ENCODE measurements at regions of chr1 and their contacts with region 1.

Region 1: GRCh38 chr1:67430352-67431155 is at the start of gene SERBP1:
- DNase-seq: peak; percentile 85 to 99 (median 90)
- ATAC-seq: peak; percentile 89
- H3K4me3 ChIP-seq: peak within 1 kb of the TSS; percentile 96
- H3K27ac ChIP-seq: peak within 1 kb of the TSS; percentile 98
- H3K4me1 ChIP-seq: peaks cover 14 to 19% of the 10 kb centered on the region in 2 experiments; a peak in 4 of 5 replicates
- H3K27me3 ChIP-seq: no peaks in the 10 kb centered on the region
- CTCF ChIP-seq: no peak; a peak in 1 of 6 replicates
- EP300 ChIP-seq: peak; percentile 5; the same call in 1 of the 2 replicates
- POLR2A ChIP-seq: peak; percentile 93
- RAD21 ChIP-seq: no peak
- polyA plus RNA-seq, gene SERBP1: 79.9 to 81.2 TPM

Region 2: GRCh38 chr1:67005068-67005467 is 425.5 kb before region 1 on chr1:
- CTCF ChIA-PET with region 1: no interaction called
- POLR2A ChIA-PET with region 1: no interaction called
- in situ Hi-C with region 1: no loop called
- intact Hi-C with region 1: no loop called
- DNase-seq: no peak
- ATAC-seq: no peak
- H3K4me3 ChIP-seq: no peak overlapping the region
- H3K27ac ChIP-seq: no peak overlapping the region
- H3K4me1 ChIP-seq: peaks cover 0 to 4% of the 10 kb centered on the region in 2 experiments; a peak in 2 of 5 replicates
- H3K27me3 ChIP-seq: no peaks in the 10 kb centered on the region
- CTCF ChIP-seq: no peak
- EP300 ChIP-seq: no peak
- POLR2A ChIP-seq: no peak
- RAD21 ChIP-seq: no peak

Region 3: DNA sequence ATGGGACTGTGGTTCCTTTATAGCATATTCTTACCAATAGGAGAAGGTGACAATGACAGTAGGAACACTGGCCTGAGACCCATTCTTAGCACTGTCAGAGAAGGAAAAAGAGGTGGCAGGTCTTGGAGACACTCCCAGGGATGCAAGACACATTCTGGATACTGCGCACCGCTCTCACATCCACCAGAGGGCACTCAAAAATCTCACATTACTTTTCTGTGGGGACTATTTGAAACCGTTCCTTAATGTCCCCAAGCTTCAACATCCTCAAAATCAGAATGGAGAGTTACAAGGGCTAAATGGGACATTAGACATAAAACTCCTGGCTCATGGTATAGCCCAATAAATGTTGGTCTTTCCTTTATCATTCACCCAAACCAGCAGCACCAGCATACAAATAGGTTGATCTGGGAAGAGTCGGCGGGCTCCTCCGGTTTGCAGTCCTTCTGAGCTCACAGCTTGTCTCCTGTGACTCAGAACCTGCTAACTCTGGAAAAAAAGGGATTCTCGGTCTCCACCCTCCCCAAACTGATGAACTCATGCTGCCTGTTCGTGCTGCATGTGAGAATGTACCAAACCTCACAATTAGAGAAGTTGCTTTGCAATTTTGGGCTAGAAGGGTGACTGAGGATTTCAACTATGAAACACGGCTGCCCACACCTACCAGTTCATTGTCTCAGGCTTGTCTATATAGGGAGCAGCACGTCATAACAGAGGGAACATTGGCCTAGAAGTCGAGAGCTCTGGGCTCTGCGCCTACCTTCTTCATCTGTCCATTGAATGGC is 82.7 kb before region 1 on chr1:
- CTCF ChIA-PET with region 1: interaction called, 3 read pairs
- POLR2A ChIA-PET with region 1: interaction called, 4 read pairs
- in situ Hi-C with region 1: no loop called
- intact Hi-C with region 1: loop called (anchors 2 kb)
- DNase-seq: peak; percentile 33 to 71 (median 58)
- ATAC-seq: peak; percentile 96
- H3K4me3 ChIP-seq: no peak overlapping the region
- H3K27ac ChIP-seq: no peak overlapping the region
- H3K4me1 ChIP-seq: peaks cover 0 to 6% of the 10 kb centered on the region in 2 experiments; a peak in 1 of 5 replicates
- H3K27me3 ChIP-seq: no peaks in the 10 kb centered on the region
- CTCF ChIP-seq: peak; percentile 69 to 87 (median 84)
- EP300 ChIP-seq: no peak
- POLR2A ChIP-seq: no peak
- RAD21 ChIP-seq: peak; percentile 73 to 93

Region 4: GRCh38 chr1:67418839-67419586 is 11.5 kb before region 1 on chr1:
- CTCF ChIA-PET with region 1: no interaction called
- POLR2A ChIA-PET with region 1: interaction called, 35 read pairs
- in situ Hi-C with region 1: no loop called
- intact Hi-C with region 1: no loop called
- DNase-seq: no peak
- ATAC-seq: no peak
- H3K4me3 ChIP-seq: no peak overlapping the region
- H3K27ac ChIP-seq: no peak overlapping the region
- H3K4me1 ChIP-seq: peaks cover 0 to 2% of the 10 kb centered on the region in 2 experiments; a peak in 1 of 5 replicates
- H3K27me3 ChIP-seq: no peaks in the 10 kb centered on the region
- CTCF ChIP-seq: no peak
- EP300 ChIP-seq: no peak
- POLR2A ChIP-seq: no peak
- RAD21 ChIP-seq: no peak

Region 5: DNA sequence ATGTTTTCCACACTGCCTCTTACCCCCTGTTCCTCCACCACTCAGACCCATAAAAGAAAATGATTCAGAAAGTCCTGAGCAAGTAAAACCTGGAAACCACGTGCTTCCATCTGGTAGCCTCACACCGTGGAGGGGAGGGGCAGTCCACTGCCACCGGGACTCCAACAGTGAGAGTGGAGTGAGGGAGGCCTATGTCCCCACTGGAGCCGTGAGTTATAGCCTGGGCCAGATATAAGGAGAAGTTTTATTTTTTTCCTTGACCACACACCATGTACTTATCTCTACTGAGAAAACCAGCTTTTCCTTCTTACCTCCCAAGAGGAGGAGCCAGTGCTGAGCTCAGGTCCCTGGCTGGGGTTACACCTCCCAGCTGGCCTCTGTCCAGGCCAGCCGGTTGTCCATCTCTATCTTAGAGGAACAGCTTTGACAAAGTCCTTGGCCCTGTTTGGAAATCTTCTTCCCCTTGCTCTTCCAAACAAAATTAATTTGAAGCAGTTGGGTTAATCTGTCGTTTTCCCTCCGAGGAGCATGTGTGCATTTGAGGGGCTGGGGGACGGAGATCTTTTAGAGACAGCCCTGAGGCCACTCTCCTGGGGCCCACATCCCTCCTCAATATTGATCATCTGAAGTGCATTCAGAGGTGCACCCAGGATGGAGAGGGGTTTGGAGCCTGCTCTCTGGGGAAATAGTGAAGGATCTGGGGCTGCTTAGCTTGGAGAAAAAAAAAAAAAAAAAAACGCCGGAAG is 48.8 kb after region 1 on chr1:
- CTCF ChIA-PET with region 1: no interaction called
- POLR2A ChIA-PET with region 1: interaction called, 4 read pairs
- in situ Hi-C with region 1: no loop called
- intact Hi-C with region 1: loop called (anchors 2 kb)
- DNase-seq: peak; percentile 83 to 95 (median 86)
- ATAC-seq: peak; percentile 95
- H3K4me3 ChIP-seq: no peak overlapping the region
- H3K27ac ChIP-seq: peak overlapping the region; percentile 61
- H3K4me1 ChIP-seq: peaks cover 22 to 30% of the 10 kb centered on the region in 2 experiments
- H3K27me3 ChIP-seq: no peaks in the 10 kb centered on the region
- CTCF ChIP-seq: no peak
- EP300 ChIP-seq: peak; percentile 71
- POLR2A ChIP-seq: no peak
- RAD21 ChIP-seq: 0 out of 4 replicates have a peak, but pooled peaks of 1 of the 2 experiments have one; percentile 13

Region 6: GRCh38 chr1:67500413-67500959 is 69.9 kb after region 1 on chr1:
- CTCF ChIA-PET with region 1: no interaction called
- POLR2A ChIA-PET with region 1: interaction called, 9 read pairs
- in situ Hi-C with region 1: no loop called
- intact Hi-C with region 1: loop called (anchors 5 kb)
- DNase-seq: peak; percentile 89 to 95 (median 90)
- ATAC-seq: peak; percentile 99
- H3K4me3 ChIP-seq: no peak overlapping the region
- H3K27ac ChIP-seq: no peak overlapping the region
- H3K4me1 ChIP-seq: peaks cover 0 to 5% of the 10 kb centered on the region in 2 experiments; a peak in 3 of 5 replicates
- H3K27me3 ChIP-seq: no peaks in the 10 kb centered on the region
- CTCF ChIP-seq: peak; percentile 97 to 99 (median 98)
- EP300 ChIP-seq: no peak
- POLR2A ChIP-seq: no peak
- RAD21 ChIP-seq: peak; percentile 98 to 99

Region 7: DNA sequence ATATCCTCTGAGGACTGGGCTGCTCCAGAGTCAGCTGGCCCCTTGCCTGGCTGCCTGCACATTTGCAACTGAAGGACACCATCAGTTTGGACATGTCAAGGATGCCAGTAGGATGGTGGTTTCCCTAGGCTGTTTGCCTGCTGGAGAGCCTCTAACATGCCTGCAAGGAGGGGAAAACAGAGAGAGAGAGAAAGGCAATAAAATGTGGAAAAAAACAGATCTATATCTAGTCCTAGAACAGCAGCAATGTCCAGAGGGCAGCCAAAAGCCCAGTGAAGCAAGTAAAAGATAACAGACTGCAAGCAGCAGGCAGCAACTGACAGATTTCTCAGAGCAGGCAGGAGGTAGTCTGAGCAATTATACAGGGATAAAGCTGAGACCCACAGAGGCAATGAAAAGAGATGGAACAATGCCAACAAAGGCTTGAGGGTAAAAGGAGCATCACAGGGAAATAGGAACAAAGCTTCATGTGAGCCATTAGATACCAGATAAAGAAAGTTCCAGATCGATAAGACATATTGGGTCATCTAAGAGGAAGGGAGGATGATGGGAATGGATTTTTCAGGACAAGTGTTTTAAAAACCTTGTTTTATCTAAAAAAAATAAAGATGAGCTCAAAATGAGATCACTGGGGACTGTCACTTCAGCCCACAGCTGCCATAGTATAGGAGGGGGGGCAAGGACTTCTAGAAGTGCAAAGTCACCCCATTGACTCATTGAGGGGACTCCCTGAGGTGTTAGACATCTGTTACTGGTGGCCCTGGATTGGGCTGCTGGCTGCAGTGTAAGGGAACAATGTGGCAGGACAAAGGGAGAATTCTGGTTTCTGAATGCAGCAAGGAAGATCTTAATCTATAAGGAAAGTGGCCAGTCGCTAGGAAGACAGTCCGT is 215.8 kb after region 1 on chr1:
- CTCF ChIA-PET with region 1: no interaction called
- POLR2A ChIA-PET with region 1: no interaction called
- in situ Hi-C with region 1: no loop called
- intact Hi-C with region 1: no loop called
- DNase-seq: peak; percentile 76 to 81 (median 80)
- ATAC-seq: peak; percentile 93
- H3K4me3 ChIP-seq: no peak overlapping the region
- H3K27ac ChIP-seq: peak overlapping the region; percentile 77
- H3K4me1 ChIP-seq: peaks cover 19 to 25% of the 10 kb centered on the region in 2 experiments
- H3K27me3 ChIP-seq: no peaks in the 10 kb centered on the region
- CTCF ChIP-seq: no peak
- EP300 ChIP-seq: peak; percentile 63
- POLR2A ChIP-seq: no peak
- RAD21 ChIP-seq: peak in 1 of 2 experiments; percentile 34; a peak in 2 of 4 replicates